Head of caudate nucleus (tissue), 42 donors: ENCODE measurements at regions of chr11 and their contacts with region 1.

Region 1: DNA sequence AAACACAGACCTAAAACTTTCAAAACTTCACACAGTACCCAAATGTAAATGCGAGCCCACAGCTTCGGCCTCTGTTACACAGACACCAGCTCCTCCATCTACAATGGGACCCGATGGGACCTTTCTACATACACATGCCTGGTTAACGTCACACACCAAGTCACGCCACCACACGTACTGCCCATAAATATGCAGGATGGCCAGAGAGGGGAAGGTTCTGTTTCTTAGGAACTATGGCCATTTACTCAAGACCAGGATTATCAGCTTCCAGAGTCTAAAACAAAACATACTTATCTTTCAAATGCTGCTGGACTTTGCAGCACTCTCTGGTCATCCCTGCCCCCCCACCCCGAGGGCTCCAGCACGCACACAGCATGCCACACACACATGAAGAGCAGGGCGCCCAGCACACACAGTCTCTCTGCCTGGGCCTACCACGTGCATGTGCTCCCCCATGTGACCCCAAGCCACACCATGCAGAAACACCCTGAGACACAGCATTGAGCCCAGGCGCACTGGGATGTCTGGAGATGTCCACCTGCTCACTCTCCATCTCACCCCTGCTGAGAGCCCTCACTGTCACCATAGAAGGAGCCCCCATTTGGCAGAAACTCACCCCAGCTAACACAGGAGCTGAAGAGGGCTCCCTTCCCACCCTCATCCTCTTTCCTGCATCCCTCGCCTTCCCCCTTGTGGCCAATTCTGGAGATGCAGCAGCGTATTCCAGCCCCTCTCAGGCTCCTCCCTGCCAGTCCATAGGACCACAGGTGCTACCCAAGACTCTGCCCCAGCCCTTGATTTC is 61.8 kb downstream of the SLC22A12 start:
- DNase-seq: peak; percentile 66 to 94 (median 87)

Region 2: GRCh38 chr11:64566042-64566914 is 86.5 kb before region 1 on chr11:
- intact Hi-C with region 1: no loop called
- DNase-seq: peak in 19 of 42 donors; percentile 20 to 58 (median 29)

Region 3: DNA sequence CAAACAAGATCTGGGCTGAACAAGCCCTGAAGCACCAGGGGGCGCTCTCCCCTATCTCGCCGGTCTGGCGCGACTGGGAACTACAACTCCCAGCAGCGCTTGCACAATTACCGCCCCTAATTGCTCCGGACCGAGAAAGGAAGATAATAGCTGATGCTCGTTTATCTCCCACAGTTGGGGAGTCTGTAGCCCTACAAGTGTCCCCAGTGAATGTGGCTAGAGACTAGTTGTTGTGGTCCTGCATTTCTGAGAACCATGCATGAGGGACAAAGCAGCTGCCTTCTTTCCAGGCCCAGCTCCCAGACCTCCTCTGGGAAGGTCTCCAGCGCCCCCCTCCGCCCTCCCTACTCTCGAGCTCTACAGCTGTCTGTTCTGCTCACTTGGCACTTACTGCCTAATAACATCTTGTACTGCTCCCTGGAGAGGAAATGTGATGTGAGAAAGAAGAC is 35.8 kb after region 1 on chr11:
- intact Hi-C with region 1: loop called (anchors 5 kb)
- DNase-seq: peak; percentile 89 to 97 (median 94)

Region 4: GRCh38 chr11:64723117-64723906 is 70.5 kb after region 1 on chr11 and contains the start of gene NRXN2:
- intact Hi-C with region 1: loop called (anchors 10 kb)
- DNase-seq: peak; percentile 86 to 98 (median 96)